ENCODE measurements at regions of chr3 and their contacts with region 1.

Region 1: GRCh38 chr3:107271787-107272387 is 105.4 kb upstream of the CCDC54 start:
- DNase-seq: peak; percentile 31 to 56 (median 51)
- H3K4me3 ChIP-seq: no peak overlapping the region
- H3K27ac ChIP-seq: no peak overlapping the region
- H3K4me1 ChIP-seq: peaks cover 0 to 12% (median 4%) of the 10 kb centered on the region in 4 experiments
- H3K27me3 ChIP-seq: no peaks in the 10 kb centered on the region

Region 2: DNA sequence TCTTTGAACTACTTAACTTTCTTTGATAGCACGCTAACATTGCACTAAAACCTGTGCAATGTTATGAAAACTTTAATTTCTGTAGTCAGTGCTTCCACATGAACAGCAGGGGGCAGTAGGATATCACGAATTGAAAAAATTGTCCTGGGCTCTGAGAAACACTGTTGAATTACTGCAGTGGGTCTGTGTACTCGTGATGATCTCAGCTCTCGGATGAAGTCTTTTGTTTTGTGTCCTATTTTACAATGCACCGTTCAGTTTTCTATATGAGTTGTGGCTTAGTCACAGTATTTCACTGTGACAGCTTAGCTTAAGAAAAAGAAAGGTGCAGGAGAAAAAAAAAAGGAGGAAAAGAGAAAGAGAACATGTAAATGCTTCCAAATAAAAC is 36.0 kb before region 1 on chr3:
- CTCF ChIA-PET with region 1: interaction called, 34 read pairs
- POLR2A ChIA-PET with region 1: no interaction called
- DNase-seq: peak; percentile 79 to 91 (median 85)
- H3K4me3 ChIP-seq: peak overlapping the region in 6 of 7 experiments; percentile 31 to 77 (median 49)
- H3K27ac ChIP-seq: no peak overlapping the region
- H3K4me1 ChIP-seq: peaks cover 0 to 7% (median 3%) of the 10 kb centered on the region in 4 experiments
- H3K27me3 ChIP-seq: no peaks in the 10 kb centered on the region

Region 3: GRCh38 chr3:107251819-107252218 is 20.1 kb before region 1 on chr3:
- CTCF ChIA-PET with region 1: interaction called, 22 read pairs
- POLR2A ChIA-PET with region 1: interaction called, 3 read pairs
- DNase-seq: no peak
- H3K4me3 ChIP-seq: no peak overlapping the region
- H3K27ac ChIP-seq: no peak overlapping the region
- H3K4me1 ChIP-seq: no peaks in the 10 kb centered on the region
- H3K27me3 ChIP-seq: no peaks in the 10 kb centered on the region

Region 4: GRCh38 chr3:107284612-107285011 is 12.7 kb after region 1 on chr3:
- CTCF ChIA-PET with region 1: interaction called, 38 read pairs
- POLR2A ChIA-PET with region 1: no interaction called
- DNase-seq: peak in 1 of 3 donors; percentile 14
- H3K4me3 ChIP-seq: no peak overlapping the region
- H3K27ac ChIP-seq: no peak overlapping the region
- H3K4me1 ChIP-seq: no peaks in the 10 kb centered on the region
- H3K27me3 ChIP-seq: no peaks in the 10 kb centered on the region

Region 5: GRCh38 chr3:107421170-107421792 is 149.4 kb after region 1 on chr3:
- CTCF ChIA-PET with region 1: interaction called, 117 read pairs
- POLR2A ChIA-PET with region 1: interaction called, 3 read pairs
- DNase-seq: peak; percentile 75 to 84 (median 84)
- H3K4me3 ChIP-seq: peak overlapping the region in 1 of 7 experiments; percentile 57
- H3K27ac ChIP-seq: no peak overlapping the region
- H3K4me1 ChIP-seq: peaks cover 0 to 4% (median 2%) of the 10 kb centered on the region in 4 experiments
- H3K27me3 ChIP-seq: no peaks in the 10 kb centered on the region

Measured in common myeloid progenitor, CD34-positive (primary cell).